Transverse colon (tissue), 4 donors: ENCODE measurements at regions of chr1 and their contacts with region 1.

Region 1: GRCh38 chr1:185388815-185389214 is 71.8 kb upstream of the IVNS1ABP start:
- DNase-seq: no peak
- H3K4me3 ChIP-seq: no peak overlapping the region
- H3K27ac ChIP-seq: no peak overlapping the region
- H3K4me1 ChIP-seq: peaks cover 0 to 6% (median 0%) of the 10 kb centered on the region in 4 donors
- H3K27me3 ChIP-seq: no peaks in the 10 kb centered on the region
- CTCF ChIP-seq: no peak
- EP300 ChIP-seq: no peak
- POLR2A ChIP-seq: no peak

Region 2: GRCh38 chr1:185325413-185325812 is 63.4 kb before region 1 on chr1:
- in situ Hi-C with region 1: loop called in 1 of 4 experiments (anchors 10 kb)
- intact Hi-C with region 1: no loop called
- DNase-seq: no peak
- H3K4me3 ChIP-seq: no peak overlapping the region
- H3K27ac ChIP-seq: no peak overlapping the region
- H3K4me1 ChIP-seq: no peaks in the 10 kb centered on the region
- H3K27me3 ChIP-seq: no peaks in the 10 kb centered on the region
- CTCF ChIP-seq: no peak
- EP300 ChIP-seq: no peak
- POLR2A ChIP-seq: no peak

Region 3: GRCh38 chr1:185520188-185520935 is 131.5 kb after region 1 on chr1:
- in situ Hi-C with region 1: no loop called
- intact Hi-C with region 1: no loop called
- DNase-seq: no peak
- H3K4me3 ChIP-seq: no peak overlapping the region
- H3K27ac ChIP-seq: no peak overlapping the region
- H3K4me1 ChIP-seq: no peaks in the 10 kb centered on the region
- H3K27me3 ChIP-seq: no peaks in the 10 kb centered on the region
- CTCF ChIP-seq: no peak
- EP300 ChIP-seq: no peak
- POLR2A ChIP-seq: no peak

Region 4: GRCh38 chr1:185813401-185813979 is 424.7 kb after region 1 on chr1:
- in situ Hi-C with region 1: no loop called
- intact Hi-C with region 1: no loop called
- DNase-seq: peak; percentile 11
- H3K4me3 ChIP-seq: no peak overlapping the region
- H3K27ac ChIP-seq: no peak overlapping the region
- H3K4me1 ChIP-seq: no peaks in the 10 kb centered on the region
- H3K27me3 ChIP-seq: no peaks in the 10 kb centered on the region
- CTCF ChIP-seq: peak; percentile 49 to 61 (median 54)
- EP300 ChIP-seq: no peak
- POLR2A ChIP-seq: no peak